ENCODE measurements at regions of chr13 and their contacts with region 1.

Region 1: DNA sequence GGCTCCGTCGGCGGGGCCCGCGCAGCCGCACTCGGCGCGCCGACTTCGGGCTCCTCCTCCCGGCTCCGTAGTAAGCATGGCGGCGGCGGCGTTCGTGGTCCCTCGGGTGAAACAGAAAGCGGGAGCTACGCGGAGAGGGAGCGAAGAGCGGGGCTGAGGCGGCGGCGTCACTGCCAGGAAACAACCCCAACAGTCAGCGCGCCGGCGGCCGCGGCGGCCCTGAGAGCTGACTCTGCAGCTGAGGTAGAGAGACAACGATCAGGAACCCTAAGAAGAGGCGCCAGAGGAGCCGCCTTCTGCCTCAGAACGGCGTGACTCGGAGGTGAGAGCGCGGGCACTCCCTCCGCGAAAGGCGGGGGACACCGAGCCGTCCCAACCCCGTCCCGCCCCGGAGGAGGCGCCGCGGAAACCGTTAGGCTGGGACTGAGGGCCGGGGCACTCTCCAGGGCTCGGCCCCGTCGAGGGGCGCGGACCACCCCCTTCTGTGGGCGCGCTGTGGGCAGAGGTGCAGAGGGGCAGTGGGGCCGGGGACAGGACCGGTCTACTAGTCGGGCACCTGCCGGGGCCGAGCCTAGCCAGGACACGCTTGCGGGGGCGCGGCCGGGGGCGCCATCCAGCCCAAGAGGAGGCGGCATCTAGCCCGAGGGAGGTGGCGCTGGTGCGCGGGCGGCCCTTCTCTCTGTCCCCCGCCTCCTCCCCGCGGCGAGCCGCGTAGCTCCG is at the start of gene FNDC3A:
- DNase-seq: peak; percentile 81 to 92
- ATAC-seq: peak; percentile 78 to 92 (median 79)
- H3K4me3 ChIP-seq: peak within 1 kb of the TSS; percentile 65
- H3K4me3 Mint-ChIP-seq: peak within 1 kb of the TSS; percentile 98
- H3K27ac ChIP-seq: peak within 1 kb of the TSS; percentile 99
- H3K27ac Mint-ChIP-seq: peak within 1 kb of the TSS; percentile 90 to 96
- H3K4me1 ChIP-seq: peaks cover 7% of the 10 kb centered on the region
- H3K4me1 Mint-ChIP-seq: peaks cover 30 to 41% of the 10 kb centered on the region in 2 donors
- H3K27me3 ChIP-seq: no peaks in the 10 kb centered on the region
- H3K27me3 Mint-ChIP-seq: peaks cover 5 to 8% of the 10 kb centered on the region in 2 donors
- CTCF ChIP-seq: no peak
- total RNA-seq, gene FNDC3A: 38.3 to 46.0 (median 41.5) TPM

Region 2: GRCh38 chr13:49110122-49110912 is 134.3 kb after region 1 on chr13:
- intact Hi-C with region 1: loop called (anchors 5 kb)
- DNase-seq: peak; percentile 67 to 93
- ATAC-seq: peak; percentile 81 to 90 (median 87)
- H3K4me3 ChIP-seq: peak overlapping the region; percentile 69
- H3K4me3 Mint-ChIP-seq: peak overlapping the region; percentile 94
- H3K27ac ChIP-seq: no peak overlapping the region
- H3K27ac Mint-ChIP-seq: peak overlapping the region; percentile 82 to 83
- H3K4me1 ChIP-seq: peaks cover 10% of the 10 kb centered on the region
- H3K4me1 Mint-ChIP-seq: peaks cover 16 to 23% of the 10 kb centered on the region in 2 donors
- H3K27me3 ChIP-seq: no peaks in the 10 kb centered on the region
- H3K27me3 Mint-ChIP-seq: no peaks in the 10 kb centered on the region
- CTCF ChIP-seq: no peak

Region 3: DNA sequence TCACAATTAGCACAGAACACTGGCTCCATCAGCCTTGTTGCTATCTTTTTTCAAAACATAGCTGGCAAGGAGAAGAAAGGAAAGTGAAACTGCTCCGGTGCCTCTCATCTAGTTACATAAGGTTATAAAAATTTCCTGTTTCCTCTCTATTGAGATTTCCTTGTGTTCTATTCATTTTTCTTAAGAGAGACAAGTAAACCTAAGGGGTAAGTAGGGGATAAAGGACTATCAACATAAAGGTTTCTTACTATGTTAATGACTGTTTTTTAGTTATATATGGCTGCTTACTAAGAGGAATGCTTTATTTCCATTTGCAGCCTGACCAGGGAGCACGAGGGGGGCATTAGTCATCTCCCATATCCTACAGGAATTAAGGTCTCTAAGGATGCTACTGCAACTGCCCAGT is 170.9 kb after region 1 on chr13:
- intact Hi-C with region 1: loop called (anchors 10 kb)
- DNase-seq: peak in 1 of 2 donors; percentile 76
- ATAC-seq: peak; percentile 75 to 85 (median 76)
- H3K4me3 ChIP-seq: peak overlapping the region; percentile 19
- H3K4me3 Mint-ChIP-seq: peak overlapping the region; percentile 83
- H3K27ac ChIP-seq: peak overlapping the region; percentile 70
- H3K27ac Mint-ChIP-seq: peak overlapping the region; percentile 90 to 94
- H3K4me1 ChIP-seq: peaks cover 4% of the 10 kb centered on the region
- H3K4me1 Mint-ChIP-seq: peaks cover 21 to 29% of the 10 kb centered on the region in 2 donors
- H3K27me3 ChIP-seq: no peaks in the 10 kb centered on the region
- H3K27me3 Mint-ChIP-seq: no peaks in the 10 kb centered on the region
- CTCF ChIP-seq: no peak